Prostate gland (tissue), 2 donors: ENCODE measurements at regions of chr5 and their contacts with region 1.

Region 1: DNA sequence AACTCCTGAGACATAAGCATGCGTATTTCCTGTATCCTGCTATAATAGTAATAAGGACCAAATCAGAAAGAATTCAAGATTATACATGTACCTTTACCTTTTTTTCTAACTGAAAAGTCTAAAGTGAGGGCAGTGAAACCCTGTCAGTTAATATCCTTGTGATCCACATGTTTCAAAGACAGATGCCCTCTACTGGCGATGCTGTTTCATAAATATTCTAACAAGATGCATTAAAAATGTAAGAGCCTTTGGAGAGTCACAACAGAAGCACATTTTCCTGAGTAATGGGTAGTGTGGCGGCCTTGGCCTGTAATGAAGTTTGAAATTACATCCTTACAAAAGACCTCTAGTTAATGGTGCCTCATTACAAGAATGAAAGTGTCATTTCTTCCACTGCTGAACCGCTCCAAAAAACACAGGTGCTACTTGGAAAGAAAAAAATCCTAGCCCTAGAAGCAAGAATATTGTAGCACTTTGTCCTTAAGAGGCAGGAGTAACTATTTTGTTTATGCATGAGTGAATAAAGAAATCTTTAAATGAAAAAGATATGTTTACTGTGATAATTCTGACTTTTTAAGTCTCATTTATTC is 232.6 kb downstream of the EPB41L4A start:
- DNase-seq: no peak
- H3K4me3 ChIP-seq: no peak overlapping the region
- H3K27ac ChIP-seq: no peak overlapping the region
- H3K4me1 ChIP-seq: no peaks in the 10 kb centered on the region
- H3K27me3 ChIP-seq: no peaks in the 10 kb centered on the region
- CTCF ChIP-seq: peak in 2 of 4 experiments; percentile 25 to 27
- POLR2A ChIP-seq: no peak

Region 2: GRCh38 chr5:111735583-111736270 is 450.8 kb before region 1 on chr5:
- intact Hi-C with region 1: no loop called
- DNase-seq: no peak
- H3K4me3 ChIP-seq: no peak overlapping the region
- H3K27ac ChIP-seq: no peak overlapping the region
- H3K4me1 ChIP-seq: no peaks in the 10 kb centered on the region
- H3K27me3 ChIP-seq: no peaks in the 10 kb centered on the region
- CTCF ChIP-seq: no peak
- POLR2A ChIP-seq: no peak

Region 3: DNA sequence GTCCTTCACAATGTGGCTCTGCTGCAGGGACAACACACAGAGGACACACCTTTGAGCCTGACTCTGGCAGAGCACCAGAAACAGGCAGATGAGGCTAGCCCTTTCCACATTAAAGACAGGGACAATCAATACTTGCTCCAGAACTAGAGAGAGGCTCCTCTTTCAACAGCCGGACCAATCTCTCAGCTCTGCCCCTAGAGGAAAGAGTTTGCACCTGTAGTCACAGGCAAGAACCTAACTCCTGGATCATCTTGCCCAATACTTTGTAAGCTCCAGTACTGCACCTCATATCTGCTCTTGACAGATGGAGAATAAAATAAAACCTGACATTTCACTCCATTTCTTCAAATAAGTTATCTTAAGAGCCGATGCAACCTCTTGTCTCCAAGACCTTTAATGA is 180.5 kb after region 1 on chr5:
- intact Hi-C with region 1: no loop called
- DNase-seq: no peak
- H3K4me3 ChIP-seq: no peak overlapping the region
- H3K27ac ChIP-seq: no peak overlapping the region
- H3K4me1 ChIP-seq: no peaks in the 10 kb centered on the region
- H3K27me3 ChIP-seq: no peaks in the 10 kb centered on the region
- CTCF ChIP-seq: no peak
- POLR2A ChIP-seq: no peak

Region 4: GRCh38 chr5:112529525-112529924 is 343.0 kb after region 1 on chr5:
- intact Hi-C with region 1: loop called (anchors 10 kb)
- DNase-seq: no peak
- H3K4me3 ChIP-seq: no peak overlapping the region
- H3K27ac ChIP-seq: no peak overlapping the region
- H3K4me1 ChIP-seq: no peaks in the 10 kb centered on the region
- H3K27me3 ChIP-seq: no peaks in the 10 kb centered on the region
- CTCF ChIP-seq: peak in 2 of 4 experiments; percentile 28 to 46
- POLR2A ChIP-seq: no peak